ENCODE measurements at regions of chr12 and their contacts with region 1.

Region 1: GRCh38 chr12:121579981-121580868 is 598 bp downstream of the KDM2B start:
- DNase-seq: peak; percentile 85
- ATAC-seq: peak; percentile 78
- H3K4me3 Mint-ChIP-seq: peak overlapping the region; percentile 85
- H3K27ac Mint-ChIP-seq: peak overlapping the region; percentile 96
- H3K4me1 Mint-ChIP-seq: peaks cover 26% of the 10 kb centered on the region
- H3K27me3 Mint-ChIP-seq: no peaks in the 10 kb centered on the region

Region 2: DNA sequence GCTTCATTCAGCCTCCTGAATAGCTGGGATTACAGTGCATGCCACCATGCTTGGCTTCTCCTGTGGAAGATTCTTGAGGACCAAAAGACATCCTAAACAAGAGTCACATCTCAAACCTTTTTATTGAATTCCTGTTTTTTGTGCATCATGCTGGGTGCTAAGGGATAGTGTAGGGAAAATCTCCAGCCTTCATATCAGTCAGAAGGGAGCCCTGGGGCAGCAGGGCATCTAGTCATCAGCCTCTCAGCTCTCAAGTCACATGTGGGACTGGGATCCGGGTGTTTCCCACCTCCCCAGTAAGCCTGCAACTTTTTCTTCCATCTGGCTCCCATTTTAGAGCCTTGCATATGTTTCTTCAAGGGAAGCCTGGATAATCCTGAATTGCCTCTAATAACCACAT is 516.1 kb before region 1 on chr12:
- CTCF ChIA-PET with region 1: no interaction called
- DNase-seq: peak; percentile 22
- ATAC-seq: no peak
- H3K4me3 Mint-ChIP-seq: no peak overlapping the region
- H3K27ac Mint-ChIP-seq: no peak overlapping the region
- H3K4me1 Mint-ChIP-seq: peaks cover 27% of the 10 kb centered on the region
- H3K27me3 Mint-ChIP-seq: no peaks in the 10 kb centered on the region

Region 3: GRCh38 chr12:121590476-121591143 is 10.4 kb after region 1 on chr12:
- CTCF ChIA-PET with region 1: interaction called, 11 read pairs
- DNase-seq: peak; percentile 81
- ATAC-seq: peak; percentile 77
- H3K4me3 Mint-ChIP-seq: peak overlapping the region; percentile 72
- H3K27ac Mint-ChIP-seq: peak overlapping the region; percentile 99
- H3K4me1 Mint-ChIP-seq: peaks cover 27% of the 10 kb centered on the region
- H3K27me3 Mint-ChIP-seq: no peaks in the 10 kb centered on the region